CD14-positive monocyte (primary cell): ENCODE measurements at regions of chr16 and their contacts with region 1.

Region 1: DNA sequence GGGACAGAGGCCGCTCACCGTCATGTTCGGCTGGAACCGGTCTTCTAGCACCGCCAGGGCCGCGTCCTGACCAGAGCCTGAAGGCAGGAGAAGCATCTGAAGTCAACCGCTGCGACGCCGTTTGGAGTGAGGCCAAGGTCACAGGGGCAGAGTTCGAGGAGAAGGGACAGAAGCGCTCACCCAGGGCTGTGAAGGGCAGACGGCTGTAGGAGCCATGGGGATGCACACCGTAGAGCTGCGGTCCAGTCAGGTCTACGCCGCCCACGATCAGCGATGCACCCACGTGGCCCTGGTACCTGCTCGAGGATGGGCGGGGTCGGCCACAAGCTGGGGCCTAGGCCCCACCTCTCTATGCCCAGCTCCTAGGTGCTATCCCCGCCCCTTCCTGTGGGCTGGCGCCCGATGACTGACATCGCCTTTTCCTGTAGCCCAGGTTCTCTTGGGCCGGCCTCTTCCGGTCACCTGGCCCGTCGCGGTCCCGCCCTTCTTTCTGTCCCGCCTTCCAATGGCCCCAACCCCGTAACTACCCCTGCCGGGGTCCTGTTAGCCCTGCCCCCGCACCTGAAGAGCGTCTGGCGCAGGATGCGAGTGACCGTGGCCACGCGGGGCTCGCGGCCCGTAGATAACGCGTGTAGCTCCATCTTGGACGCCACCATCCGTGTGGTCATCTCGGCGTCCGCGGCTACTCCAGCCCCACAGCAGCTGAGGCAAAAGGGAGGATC is 1.1 kb downstream of the PSMB10 start:
- DNase-seq: peak; percentile 78 to 86 (median 82)
- H3K4me3 ChIP-seq: peak overlapping the region; percentile 84 to 93 (median 90)
- H3K4me3 Mint-ChIP-seq: peak overlapping the region; percentile 98 to 99
- H3K27ac ChIP-seq: peak overlapping the region; percentile 89 to 93
- H3K27ac Mint-ChIP-seq: peak overlapping the region; percentile 91 to 98 (median 96)
- H3K4me1 ChIP-seq: peaks cover 29 to 40% of the 10 kb centered on the region in 2 donors
- H3K4me1 Mint-ChIP-seq: peaks cover 36% of the 10 kb centered on the region
- H3K27me3 ChIP-seq: no peaks in the 10 kb centered on the region
- H3K27me3 Mint-ChIP-seq: peaks cover 0 to 2% (median 0%) of the 10 kb centered on the region in 3 donors
- CTCF ChIP-seq: no peak

Region 2: DNA sequence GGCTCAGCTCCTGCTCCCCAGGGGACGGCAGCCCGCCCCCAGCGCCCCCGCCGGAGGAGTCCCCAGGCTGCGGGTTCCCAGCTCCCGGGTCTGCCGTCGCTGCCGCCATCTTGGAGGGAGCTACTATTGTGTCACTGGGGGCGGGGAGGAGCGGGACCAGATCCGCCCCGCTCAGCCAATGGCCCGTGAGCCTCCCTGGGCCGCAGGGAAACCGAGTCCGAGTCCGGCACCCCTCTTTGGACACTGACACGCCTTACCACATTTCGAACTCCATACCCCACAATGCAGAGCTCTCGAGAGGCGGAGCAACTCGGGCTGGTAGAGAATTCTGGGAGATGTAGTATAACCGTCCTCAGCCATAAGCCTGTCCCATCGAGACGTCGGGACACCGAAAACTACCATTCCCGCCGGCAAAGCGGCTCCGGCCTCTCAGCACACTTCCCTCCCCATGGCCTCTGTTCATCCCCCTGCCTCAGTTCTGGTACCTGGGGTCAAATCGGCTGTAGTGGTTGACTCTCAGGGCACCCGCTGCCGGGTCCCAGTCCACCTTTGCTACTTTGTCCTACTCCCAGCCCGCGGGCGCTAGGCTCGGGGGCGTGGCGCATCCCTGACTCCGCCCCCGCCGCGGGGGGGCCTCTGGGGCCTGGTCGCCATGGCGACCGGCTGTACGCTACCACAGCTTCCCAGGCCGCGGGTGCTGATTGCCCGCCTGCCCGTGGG is 129.0 kb before region 1 on chr16 and contains the starts of genes RANBP10 and TSNAXIP1:
- intact Hi-C with region 1: loop called (anchors 5 to 10 kb)
- DNase-seq: peak; percentile 98 to 99 (median 99)
- H3K4me3 ChIP-seq: peak within 1 kb of the TSS; percentile 76 to 97 (median 84)
- H3K4me3 Mint-ChIP-seq: peak within 1 kb of the TSS; percentile 84 to 94
- H3K27ac ChIP-seq: peak within 1 kb of the TSS; percentile 30 to 92
- H3K27ac Mint-ChIP-seq: peak within 1 kb of the TSS; percentile 73 to 96 (median 94)
- H3K4me1 ChIP-seq: peaks cover 22 to 34% of the 10 kb centered on the region in 2 donors
- H3K4me1 Mint-ChIP-seq: peaks cover 28% of the 10 kb centered on the region
- H3K27me3 ChIP-seq: no peaks in the 10 kb centered on the region
- H3K27me3 Mint-ChIP-seq: peaks cover under 1 to 2% (median 2%) of the 10 kb centered on the region in 3 donors
- CTCF ChIP-seq: no peak
- polyA plus RNA-seq, gene RANBP10: 6.4 to 16.7 (median 6.6) TPM
- polyA plus RNA-seq, gene TSNAXIP1: 0.23 TPM in 1 of 3 donors, not detected in the others

Region 3: DNA sequence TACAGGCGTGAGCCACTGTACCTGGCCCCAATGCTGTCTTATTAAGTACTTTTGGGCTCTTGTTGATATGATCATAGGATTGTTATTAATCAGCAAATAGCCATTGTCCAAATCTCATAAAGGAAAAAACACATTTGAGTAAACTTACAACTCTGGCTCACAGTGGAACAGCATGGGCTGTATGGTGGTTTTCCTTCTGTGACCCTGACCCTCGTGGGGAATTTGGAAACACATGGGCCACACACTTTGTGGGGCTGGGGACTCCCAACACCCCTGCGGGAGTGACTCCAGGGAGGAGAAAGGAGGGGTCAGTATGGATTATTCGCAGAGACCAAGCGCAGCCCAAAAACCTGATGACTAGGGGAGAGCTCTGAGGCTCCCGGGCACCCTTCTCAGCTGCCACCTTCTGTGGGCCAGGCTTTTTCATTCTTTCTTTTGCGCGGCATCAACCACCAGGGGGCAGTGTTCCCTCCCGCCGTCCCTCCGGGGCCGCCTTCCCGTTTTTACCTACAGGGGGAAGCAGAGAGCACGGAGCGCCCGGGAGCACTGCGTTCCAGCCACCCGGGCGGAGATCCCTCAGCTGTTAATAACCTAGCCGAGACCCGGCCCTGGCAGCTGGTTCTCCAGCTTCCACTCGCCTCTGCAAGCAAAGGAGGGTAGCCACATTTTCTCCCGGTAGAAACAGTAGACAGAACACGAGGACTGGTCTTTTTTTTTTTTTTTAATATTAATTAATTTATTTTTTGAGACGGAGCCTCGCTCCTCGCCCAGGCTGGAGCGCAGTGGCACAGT is 119.1 kb before region 1 on chr16:
- intact Hi-C with region 1: loop called in 1 of 2 experiments (anchors 10 kb)
- DNase-seq: peak; percentile 77 to 82 (median 79)
- H3K4me3 ChIP-seq: no peak overlapping the region
- H3K4me3 Mint-ChIP-seq: no peak overlapping the region
- H3K27ac ChIP-seq: no peak overlapping the region
- H3K27ac Mint-ChIP-seq: peak overlapping the region in 1 of 7 donors; percentile 37
- H3K4me1 ChIP-seq: no peaks in the 10 kb centered on the region
- H3K4me1 Mint-ChIP-seq: peaks cover 2% of the 10 kb centered on the region
- H3K27me3 ChIP-seq: no peaks in the 10 kb centered on the region
- H3K27me3 Mint-ChIP-seq: peaks cover 0 to 6% (median 3%) of the 10 kb centered on the region in 3 donors
- CTCF ChIP-seq: peak; percentile 100

Region 4: DNA sequence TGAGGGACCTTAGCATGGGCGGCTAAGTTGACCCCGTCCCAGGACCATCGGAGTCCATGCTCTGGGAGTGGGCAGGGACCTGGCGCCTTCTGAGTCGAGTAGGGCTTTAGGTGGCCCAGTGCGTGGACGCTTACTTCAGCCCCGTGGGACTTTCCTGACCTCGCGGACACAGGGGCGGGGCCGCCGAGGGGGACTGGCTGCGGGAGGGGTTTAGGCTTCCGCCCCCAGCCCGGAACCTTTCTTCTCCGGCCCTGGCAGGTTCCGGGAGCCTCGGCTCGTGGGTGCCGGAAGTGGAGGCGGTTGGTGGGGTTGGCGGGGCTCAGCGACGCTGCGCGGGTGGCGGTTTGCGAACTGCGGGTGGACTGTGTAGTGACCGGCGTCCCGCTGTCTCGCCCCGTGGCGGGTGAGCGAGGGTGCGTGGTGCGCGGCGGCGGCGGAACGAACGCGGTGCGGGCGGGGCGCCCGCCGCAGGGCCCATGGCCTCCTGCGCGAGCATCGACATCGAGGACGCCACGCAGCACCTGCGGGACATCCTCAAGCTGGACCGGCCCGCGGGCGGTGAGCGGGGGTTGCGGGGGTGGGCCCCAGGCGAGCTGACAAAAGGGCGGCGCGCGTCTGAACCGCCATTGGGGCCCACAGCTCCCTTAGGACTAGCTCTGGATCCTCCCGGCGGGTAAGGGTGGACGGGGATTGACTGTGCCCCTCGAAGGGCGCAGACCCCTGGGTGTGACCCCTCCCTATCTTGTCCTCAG is 62.6 kb before region 1 on chr16 and contains the start of gene EDC4:
- intact Hi-C with region 1: loop called in 1 of 2 experiments (anchors 10 kb)
- DNase-seq: peak; percentile 85 to 94 (median 90)
- H3K4me3 ChIP-seq: peak within 1 kb of the TSS; percentile 92 to 99 (median 93)
- H3K4me3 Mint-ChIP-seq: peak within 1 kb of the TSS; percentile 89 to 94
- H3K27ac ChIP-seq: peak within 1 kb of the TSS; percentile 87 to 90
- H3K27ac Mint-ChIP-seq: peak within 1 kb of the TSS; percentile 89 to 96 (median 92)
- H3K4me1 ChIP-seq: peaks cover 31 to 34% of the 10 kb centered on the region in 2 donors
- H3K4me1 Mint-ChIP-seq: peaks cover 38% of the 10 kb centered on the region
- H3K27me3 ChIP-seq: no peaks in the 10 kb centered on the region
- H3K27me3 Mint-ChIP-seq: peaks cover 0 to 3% (median 0%) of the 10 kb centered on the region in 3 donors
- CTCF ChIP-seq: no peak
- polyA plus RNA-seq, gene EDC4: 13.7 to 84.9 (median 18.2) TPM

Region 5: GRCh38 chr16:67892899-67893742 is 42.4 kb before region 1 on chr16 and contains the start of gene PSKH1:
- intact Hi-C with region 1: loop called (anchors 5 kb)
- DNase-seq: peak; percentile 92 to 94 (median 93)
- H3K4me3 ChIP-seq: peak within 1 kb of the TSS; percentile 58 to 91 (median 90)
- H3K4me3 Mint-ChIP-seq: peak within 1 kb of the TSS; percentile 89 to 95
- H3K27ac ChIP-seq: peak within 1 kb of the TSS; percentile 89 to 97
- H3K27ac Mint-ChIP-seq: peak within 1 kb of the TSS; percentile 93 to 98 (median 95)
- H3K4me1 ChIP-seq: peaks cover 18 to 21% of the 10 kb centered on the region in 2 donors
- H3K4me1 Mint-ChIP-seq: peaks cover 24% of the 10 kb centered on the region
- H3K27me3 ChIP-seq: no peaks in the 10 kb centered on the region
- H3K27me3 Mint-ChIP-seq: no peaks in the 10 kb centered on the region
- CTCF ChIP-seq: no peak
- polyA plus RNA-seq, gene PSKH1: 11.0 to 19.7 (median 16.8) TPM

Region 6: DNA sequence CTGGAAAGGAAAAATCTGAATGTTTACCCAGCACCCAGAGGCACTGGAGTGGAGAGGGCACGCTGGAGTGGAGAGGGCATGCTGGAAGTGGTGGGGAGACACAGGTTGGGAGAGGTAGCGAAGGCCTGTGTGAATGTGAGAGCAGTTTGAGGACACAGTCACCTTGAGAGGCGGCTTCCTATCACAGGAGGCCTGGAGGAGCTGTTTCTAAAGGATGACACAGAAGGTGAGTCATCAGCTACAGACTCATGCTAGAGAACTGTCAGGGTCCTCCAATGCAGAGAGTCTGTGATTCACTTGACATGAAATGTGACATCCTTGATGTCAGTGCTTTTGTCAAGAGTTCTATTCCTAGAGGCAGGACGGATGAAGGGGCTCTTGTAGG is 17.7 kb before region 1 on chr16:
- intact Hi-C with region 1: no loop called
- DNase-seq: peak in 2 of 3 donors; percentile 7 to 62
- H3K4me3 ChIP-seq: no peak overlapping the region
- H3K4me3 Mint-ChIP-seq: no peak overlapping the region
- H3K27ac ChIP-seq: no peak overlapping the region
- H3K27ac Mint-ChIP-seq: peak overlapping the region in 4 of 7 donors; percentile 46 to 86 (median 76)
- H3K4me1 ChIP-seq: no peaks in the 10 kb centered on the region
- H3K4me1 Mint-ChIP-seq: peaks cover 6% of the 10 kb centered on the region
- H3K27me3 ChIP-seq: no peaks in the 10 kb centered on the region
- H3K27me3 Mint-ChIP-seq: no peaks in the 10 kb centered on the region
- CTCF ChIP-seq: no peak

Region 7: DNA sequence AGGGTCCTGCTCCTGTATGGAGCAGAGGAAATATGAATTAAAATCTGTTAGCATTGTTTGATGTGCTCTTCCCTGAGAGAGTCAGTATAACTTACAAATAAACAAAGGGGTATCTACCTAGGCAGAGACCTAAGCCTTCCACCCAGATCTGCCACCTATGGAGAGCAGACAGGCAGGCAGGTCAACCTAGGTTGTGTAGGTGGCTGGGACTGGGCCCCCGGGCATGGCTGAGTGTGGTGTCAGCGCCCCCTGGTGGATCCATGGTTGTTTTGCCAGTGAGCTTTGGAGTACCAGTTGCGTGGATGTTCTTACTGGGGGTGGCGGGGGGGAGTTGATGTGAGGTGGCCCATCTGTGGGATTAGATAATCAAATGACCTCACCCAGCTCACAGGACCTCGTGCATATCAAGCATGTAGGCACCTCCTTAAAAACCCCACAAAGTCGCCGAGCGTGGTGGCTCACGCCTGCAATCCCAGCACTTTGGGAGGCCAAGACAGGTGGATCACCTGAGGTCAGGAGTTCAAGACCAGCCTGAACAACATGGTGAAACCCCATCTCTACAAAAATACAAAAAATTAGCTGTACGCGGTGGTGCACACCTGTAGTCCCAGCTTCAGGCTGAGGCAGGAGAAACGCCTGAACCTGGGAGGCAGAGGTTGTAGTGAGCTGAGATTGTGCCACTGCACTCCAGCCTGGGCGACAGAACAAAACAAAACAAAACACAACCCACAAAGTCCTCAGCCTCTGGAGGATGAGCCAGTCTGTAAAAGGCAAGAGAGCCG is 105.1 kb after region 1 on chr16:
- intact Hi-C with region 1: loop called in 1 of 2 experiments (anchors 5 kb)
- DNase-seq: peak; percentile 69 to 79 (median 77)
- H3K4me3 ChIP-seq: peak overlapping the region in 1 of 3 experiments; percentile 62
- H3K4me3 Mint-ChIP-seq: peak overlapping the region; percentile 51 to 58
- H3K27ac ChIP-seq: peak overlapping the region; percentile 80
- H3K27ac Mint-ChIP-seq: peak overlapping the region; percentile 74 to 96 (median 90)
- H3K4me1 ChIP-seq: peaks cover 72 to 82% of the 10 kb centered on the region in 2 donors
- H3K4me1 Mint-ChIP-seq: peaks cover 74% of the 10 kb centered on the region
- H3K27me3 ChIP-seq: no peaks in the 10 kb centered on the region
- H3K27me3 Mint-ChIP-seq: peaks cover 0 to 2% (median 1%) of the 10 kb centered on the region in 3 donors
- CTCF ChIP-seq: peak; percentile 88